Activated B cell treated with CpG ODN at 0.5 μM for 24 hours (primary cell): ENCODE measurements at regions of chr16 and their contacts with region 1.

Region 1: DNA sequence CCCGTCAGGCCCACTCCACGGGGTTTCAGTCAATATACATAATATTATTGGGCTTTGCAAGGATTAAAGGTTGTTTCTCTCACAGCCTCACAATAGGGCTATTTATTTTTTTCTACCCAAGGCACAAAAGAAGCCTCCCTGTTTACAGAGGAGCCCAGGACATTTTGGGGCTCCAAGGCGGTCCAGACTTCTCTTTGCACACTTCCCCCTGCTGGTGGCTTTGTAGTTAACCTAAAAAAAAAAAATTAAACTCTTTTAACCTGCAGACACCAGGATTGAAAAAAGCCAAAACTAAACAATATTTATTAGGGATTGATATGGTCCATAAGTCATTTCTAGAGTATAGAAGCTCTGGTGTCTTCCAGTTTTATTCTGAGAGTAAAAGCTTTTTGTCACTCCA is 169.7 kb upstream of the ZFHX3 start:
- DNase-seq: no peak
- ATAC-seq: no peak
- H3K4me3 Mint-ChIP-seq: no peak overlapping the region
- H3K27ac Mint-ChIP-seq: no peak overlapping the region
- H3K4me1 Mint-ChIP-seq: no peaks in the 10 kb centered on the region
- H3K27me3 Mint-ChIP-seq: no peaks in the 10 kb centered on the region
- CTCF ChIP-seq: no peak

Region 2: DNA sequence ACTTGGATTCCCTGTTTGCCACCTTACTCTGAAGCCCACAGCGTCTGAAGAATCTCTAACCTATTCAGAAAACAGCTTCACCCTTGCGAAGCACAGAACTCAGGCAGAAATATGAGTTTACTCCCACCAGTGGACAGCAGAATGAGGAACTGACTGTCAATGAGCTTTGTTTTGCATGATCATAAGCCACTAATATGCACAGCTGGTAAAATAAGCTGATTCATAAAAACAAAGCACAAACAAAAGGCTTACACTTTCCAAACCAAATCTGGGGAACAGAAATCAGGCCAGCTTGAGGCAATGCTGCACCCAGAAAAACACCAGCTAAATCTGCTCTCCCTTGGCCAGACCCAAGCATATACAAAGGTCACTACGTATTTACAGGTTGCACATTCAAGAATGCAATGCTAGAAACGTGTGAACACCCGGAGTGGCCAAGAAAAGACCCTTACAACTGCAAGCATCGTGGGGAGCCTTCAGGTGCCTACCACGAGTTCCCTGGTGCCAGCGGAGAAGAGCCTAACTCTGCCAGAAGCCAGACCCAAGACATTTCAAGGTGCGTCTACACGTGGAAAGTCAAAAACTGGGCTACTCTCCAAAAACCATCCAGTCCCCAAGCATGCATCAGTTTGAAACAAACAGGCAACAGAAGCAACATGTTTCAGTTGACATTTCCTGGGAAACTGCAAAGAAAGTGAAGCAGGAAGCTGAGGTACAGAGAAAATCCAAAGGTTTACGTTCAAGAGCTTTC is 376.8 kb before region 1 on chr16:
- CTCF ChIA-PET with region 1: interaction called, 3 read pairs
- POLR2A ChIA-PET with region 1: interaction called, 10 read pairs
- intact Hi-C with region 1: no loop called
- DNase-seq: no peak
- ATAC-seq: no peak
- H3K4me3 Mint-ChIP-seq: no peak overlapping the region
- H3K27ac Mint-ChIP-seq: no peak overlapping the region
- H3K4me1 Mint-ChIP-seq: peaks cover 16% of the 10 kb centered on the region
- H3K27me3 Mint-ChIP-seq: peaks cover 9% of the 10 kb centered on the region
- CTCF ChIP-seq: no peak

Region 3: DNA sequence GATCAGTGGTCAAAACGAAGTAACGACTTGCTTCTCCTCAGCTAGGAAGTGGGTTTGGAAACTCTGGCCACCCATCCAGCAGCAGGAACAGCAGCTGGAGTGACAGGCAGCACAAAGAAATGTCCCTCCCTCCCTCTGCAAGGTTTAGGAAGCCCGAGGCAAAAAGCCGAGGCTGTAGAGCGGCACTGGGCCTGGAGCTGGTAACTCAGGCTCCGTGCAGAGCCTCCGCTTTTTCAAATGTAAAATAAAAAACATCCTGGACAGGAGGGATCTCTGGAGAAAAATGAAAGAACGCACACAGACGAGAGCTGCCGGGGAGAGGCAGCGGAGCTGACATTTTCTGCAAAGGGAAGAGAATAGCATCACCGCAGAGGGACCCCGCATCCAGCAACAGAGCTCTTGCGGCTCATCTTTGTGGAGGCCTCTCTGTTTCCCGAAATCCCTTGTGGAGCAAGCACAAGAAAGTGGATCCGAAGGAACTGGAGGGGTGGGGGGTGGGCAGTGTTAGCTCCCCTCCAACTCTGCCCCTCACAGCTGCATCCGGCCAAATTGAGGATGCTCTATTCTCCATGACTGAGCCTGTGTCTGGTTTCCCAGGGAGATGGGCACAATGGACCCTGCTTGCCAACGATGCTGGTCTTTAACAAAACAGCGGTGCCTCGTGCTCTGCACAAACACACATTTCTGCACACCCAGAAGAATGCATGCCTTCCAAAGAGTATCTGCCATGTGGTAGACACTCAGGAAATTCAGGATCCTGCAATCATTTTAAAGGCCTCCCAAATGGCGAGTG is 165.7 kb after region 1 on chr16:
- CTCF ChIA-PET with region 1: no interaction called
- POLR2A ChIA-PET with region 1: no interaction called
- intact Hi-C with region 1: no loop called
- DNase-seq: no peak
- ATAC-seq: no peak
- H3K4me3 Mint-ChIP-seq: no peak overlapping the region
- H3K27ac Mint-ChIP-seq: no peak overlapping the region
- H3K4me1 Mint-ChIP-seq: no peaks in the 10 kb centered on the region
- H3K27me3 Mint-ChIP-seq: no peaks in the 10 kb centered on the region
- CTCF ChIP-seq: no peak